Activated CD4-positive, alpha-beta memory T cell treated with anti-CD3 and anti-CD28 coated beads for 36 hours (primary cell): ENCODE measurements at regions of chr2 and their contacts with region 1.

Region 1: DNA sequence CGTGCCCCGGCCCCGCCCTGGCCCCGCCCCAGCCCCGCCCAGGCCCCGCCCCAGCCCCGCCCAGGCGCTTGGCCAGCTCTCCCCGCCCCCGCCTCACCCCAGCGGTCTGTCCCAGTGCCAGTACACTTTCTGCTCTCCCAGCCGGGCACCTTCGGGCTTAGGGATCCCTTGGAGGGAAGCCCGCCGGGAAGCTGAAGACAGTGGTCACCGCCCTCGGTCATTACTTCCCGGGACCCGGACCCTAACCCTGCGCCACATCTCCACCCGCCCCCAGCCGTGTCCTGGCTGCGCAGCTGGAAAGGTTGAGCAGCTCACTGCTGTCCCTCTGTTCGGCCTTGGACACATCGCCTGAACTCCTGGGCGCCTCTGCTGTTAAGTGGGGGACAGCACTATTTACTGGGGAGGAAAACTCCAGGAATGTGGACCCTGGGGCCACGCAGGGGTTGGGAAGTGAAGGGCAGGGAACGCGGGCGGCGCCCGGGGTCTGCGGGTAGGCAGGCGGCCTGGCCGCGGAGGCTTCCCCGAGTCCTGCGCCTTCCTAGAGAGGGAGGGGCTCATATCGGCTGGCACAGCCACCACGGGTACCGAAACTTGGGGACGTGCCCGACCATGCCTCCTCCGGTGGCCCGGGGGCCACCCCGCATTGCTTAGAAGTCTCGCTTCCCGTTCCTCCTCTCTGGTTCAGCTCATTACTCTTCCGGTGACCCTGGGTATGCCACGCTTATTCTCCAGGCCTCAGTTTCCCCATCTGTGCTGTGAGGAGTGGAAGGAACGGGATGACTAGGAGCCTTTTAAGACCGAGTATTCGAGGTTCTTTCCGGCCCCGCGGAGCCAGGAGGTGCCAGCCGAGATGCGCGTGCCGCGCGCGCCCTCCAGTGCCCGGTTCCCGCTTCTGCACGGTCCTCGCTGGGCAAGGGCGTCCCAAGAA is 121.0 kb downstream of the GYPC start:
- DNase-seq: peak; percentile 87
- H3K4me3 Mint-ChIP-seq: peak overlapping the region; percentile 83
- H3K27ac Mint-ChIP-seq: no peak overlapping the region
- H3K4me1 Mint-ChIP-seq: peaks cover 7% of the 10 kb centered on the region
- H3K27me3 Mint-ChIP-seq: peaks cover 2% of the 10 kb centered on the region

Region 2: DNA sequence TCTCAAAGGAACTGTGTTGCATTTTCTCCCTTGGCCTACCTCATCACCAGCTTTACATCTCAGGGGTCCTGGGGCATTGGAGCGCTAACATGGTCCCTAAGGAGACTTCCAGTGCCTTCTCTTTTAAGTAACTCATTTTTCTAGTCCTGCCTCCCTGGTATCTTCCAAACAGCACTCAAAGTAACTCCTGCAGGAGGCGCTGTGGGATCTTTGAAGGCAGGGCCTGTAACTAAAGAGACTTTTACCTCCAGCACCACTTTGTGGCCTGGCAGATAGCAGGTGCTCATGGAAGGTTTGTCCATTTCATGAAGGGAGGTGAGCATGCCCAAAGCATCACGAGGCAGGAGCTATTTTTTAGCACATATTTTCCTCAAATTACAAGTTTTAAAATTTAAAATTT is 532.0 kb before region 1 on chr2:
- CTCF ChIA-PET with region 1: interaction called, 7 read pairs
- POLR2A ChIA-PET with region 1: no interaction called
- intact Hi-C with region 1: loop called (anchors 1 kb)
- DNase-seq: peak; percentile 61
- H3K4me3 Mint-ChIP-seq: no peak overlapping the region
- H3K27ac Mint-ChIP-seq: no peak overlapping the region
- H3K4me1 Mint-ChIP-seq: no peaks in the 10 kb centered on the region
- H3K27me3 Mint-ChIP-seq: no peaks in the 10 kb centered on the region

Region 3: DNA sequence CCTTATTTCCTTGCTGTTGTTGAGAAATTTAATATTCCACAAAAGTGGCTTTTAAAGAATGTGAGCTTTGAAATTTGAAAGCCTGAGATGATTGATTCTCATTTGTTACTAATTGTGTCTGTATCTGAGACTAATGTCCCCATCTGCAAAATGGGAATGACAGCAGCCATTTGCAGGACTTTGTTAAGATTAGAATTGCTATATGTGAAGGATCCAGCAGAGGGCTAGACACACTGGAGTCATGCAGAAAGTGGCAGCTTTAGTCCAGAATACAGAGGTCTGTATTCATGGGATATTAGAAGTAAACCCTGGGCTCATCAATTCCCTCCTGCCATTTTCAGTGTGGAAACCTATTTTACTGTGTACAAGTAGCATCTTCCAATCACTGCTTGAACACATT is 417.5 kb before region 1 on chr2:
- CTCF ChIA-PET with region 1: interaction called, 16 read pairs
- POLR2A ChIA-PET with region 1: no interaction called
- intact Hi-C with region 1: loop called (anchors 1 kb)
- DNase-seq: no peak
- H3K4me3 Mint-ChIP-seq: no peak overlapping the region
- H3K27ac Mint-ChIP-seq: no peak overlapping the region
- H3K4me1 Mint-ChIP-seq: no peaks in the 10 kb centered on the region
- H3K27me3 Mint-ChIP-seq: peaks cover 9% of the 10 kb centered on the region

Region 4: GRCh38 chr2:126399001-126399400 is 378.0 kb before region 1 on chr2:
- CTCF ChIA-PET with region 1: interaction called, 37 read pairs
- POLR2A ChIA-PET with region 1: no interaction called
- intact Hi-C with region 1: loop called (anchors 1 kb)
- DNase-seq: peak; percentile 24
- H3K4me3 Mint-ChIP-seq: no peak overlapping the region
- H3K27ac Mint-ChIP-seq: no peak overlapping the region
- H3K4me1 Mint-ChIP-seq: no peaks in the 10 kb centered on the region
- H3K27me3 Mint-ChIP-seq: peaks cover 12% of the 10 kb centered on the region

Region 5: DNA sequence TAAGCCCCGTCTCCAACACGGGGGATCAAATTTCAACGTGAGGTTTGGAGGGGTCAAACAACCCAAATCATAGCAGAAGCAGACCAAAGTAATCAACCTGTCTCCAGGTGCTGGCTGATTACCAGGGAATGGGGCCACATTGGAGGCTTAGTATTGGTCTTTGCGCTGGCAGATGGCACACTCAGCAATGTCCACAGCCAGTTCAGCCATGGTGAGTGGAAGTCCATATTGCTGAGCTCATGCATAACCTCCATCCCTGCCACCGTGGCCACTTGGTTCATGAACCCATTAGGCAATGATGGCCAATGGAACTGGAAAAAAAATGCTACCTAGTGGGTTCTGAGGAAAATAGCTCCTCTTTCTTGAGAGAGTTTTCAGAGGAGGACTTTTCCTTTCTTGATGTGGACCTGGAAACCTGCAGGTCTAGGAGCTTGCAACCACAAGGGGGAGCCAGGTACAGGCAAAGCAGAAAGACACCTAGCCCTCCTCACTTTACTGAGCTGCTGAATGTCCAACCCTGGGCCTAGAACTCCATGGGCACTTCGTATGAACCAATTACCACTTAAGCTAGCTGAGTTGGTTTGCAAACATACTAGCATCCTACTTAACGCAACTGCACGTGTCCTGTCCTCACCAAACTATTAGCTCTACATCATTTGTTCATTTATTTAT is 249.0 kb before region 1 on chr2:
- CTCF ChIA-PET with region 1: interaction called, 135 read pairs
- POLR2A ChIA-PET with region 1: no interaction called
- intact Hi-C with region 1: loop called (anchors 1 kb)
- DNase-seq: peak; percentile 73
- H3K4me3 Mint-ChIP-seq: no peak overlapping the region
- H3K27ac Mint-ChIP-seq: no peak overlapping the region
- H3K4me1 Mint-ChIP-seq: no peaks in the 10 kb centered on the region
- H3K27me3 Mint-ChIP-seq: no peaks in the 10 kb centered on the region

Region 6: DNA sequence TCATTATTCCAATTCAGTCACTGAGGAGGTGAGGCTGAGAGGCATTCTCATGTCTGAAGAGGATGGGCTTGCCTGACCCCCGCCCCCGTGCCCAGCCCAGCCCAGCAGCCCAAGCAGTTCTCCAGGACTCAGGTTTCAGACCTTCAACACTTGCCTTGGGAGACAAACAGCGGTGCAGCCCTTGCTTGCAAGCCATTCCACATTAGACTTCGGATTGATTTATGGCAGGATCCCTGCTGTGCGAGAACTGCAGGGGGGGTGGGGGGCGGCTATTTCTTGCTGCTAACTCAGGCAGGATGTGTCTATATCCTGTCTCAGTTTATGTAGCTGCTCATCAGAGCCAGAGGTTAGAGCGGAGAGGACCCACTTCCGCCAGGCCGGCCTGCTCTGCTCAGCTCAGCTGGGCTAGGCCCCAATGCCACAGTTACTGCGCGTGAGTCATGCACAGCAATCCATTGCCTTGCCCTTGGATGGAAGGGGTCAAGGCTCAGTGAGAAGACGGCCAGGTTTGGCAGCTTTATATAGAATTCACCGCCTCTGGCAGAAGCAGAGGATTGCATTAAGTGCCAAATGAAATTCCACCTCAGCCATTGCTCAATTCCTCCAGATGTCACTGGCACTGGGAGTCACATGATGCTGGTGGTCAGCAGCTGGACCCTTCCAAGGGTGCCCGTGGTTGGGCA is 119.2 kb before region 1 on chr2:
- CTCF ChIA-PET with region 1: interaction called, 5 read pairs
- POLR2A ChIA-PET with region 1: no interaction called
- intact Hi-C with region 1: loop called (anchors 1 kb)
- DNase-seq: peak; percentile 89
- H3K4me3 Mint-ChIP-seq: peak overlapping the region; percentile 91
- H3K27ac Mint-ChIP-seq: peak overlapping the region; percentile 97
- H3K4me1 Mint-ChIP-seq: peaks cover 52% of the 10 kb centered on the region
- H3K27me3 Mint-ChIP-seq: no peaks in the 10 kb centered on the region

Region 7: DNA sequence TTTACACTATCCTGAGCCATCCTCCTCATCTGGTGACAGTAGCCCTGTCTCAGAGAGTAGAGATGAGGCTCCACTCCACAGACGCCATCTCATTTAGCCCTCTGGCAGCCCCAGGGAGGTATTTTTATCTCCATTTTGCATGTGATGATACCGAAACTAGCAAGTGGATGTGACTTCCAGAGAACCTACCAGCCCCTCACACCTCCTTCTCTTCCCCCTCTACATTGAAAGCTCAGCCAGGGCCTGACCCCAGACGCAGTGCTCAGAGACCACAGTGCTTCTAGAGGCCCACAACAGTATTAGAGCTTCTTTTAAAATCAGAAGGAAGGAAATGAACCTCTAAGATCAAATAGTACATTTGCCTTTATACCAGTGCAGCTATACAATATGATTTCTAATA is 112.7 kb before region 1 on chr2:
- CTCF ChIA-PET with region 1: interaction called, 10 read pairs
- POLR2A ChIA-PET with region 1: no interaction called
- intact Hi-C with region 1: no loop called
- DNase-seq: peak; percentile 45
- H3K4me3 Mint-ChIP-seq: peak overlapping the region; percentile 51
- H3K27ac Mint-ChIP-seq: peak overlapping the region; percentile 93
- H3K4me1 Mint-ChIP-seq: peaks cover 82% of the 10 kb centered on the region
- H3K27me3 Mint-ChIP-seq: no peaks in the 10 kb centered on the region